MCF 10A (cell line): ENCODE measurements at regions of chr2 and their contacts with region 1.

Region 1: DNA sequence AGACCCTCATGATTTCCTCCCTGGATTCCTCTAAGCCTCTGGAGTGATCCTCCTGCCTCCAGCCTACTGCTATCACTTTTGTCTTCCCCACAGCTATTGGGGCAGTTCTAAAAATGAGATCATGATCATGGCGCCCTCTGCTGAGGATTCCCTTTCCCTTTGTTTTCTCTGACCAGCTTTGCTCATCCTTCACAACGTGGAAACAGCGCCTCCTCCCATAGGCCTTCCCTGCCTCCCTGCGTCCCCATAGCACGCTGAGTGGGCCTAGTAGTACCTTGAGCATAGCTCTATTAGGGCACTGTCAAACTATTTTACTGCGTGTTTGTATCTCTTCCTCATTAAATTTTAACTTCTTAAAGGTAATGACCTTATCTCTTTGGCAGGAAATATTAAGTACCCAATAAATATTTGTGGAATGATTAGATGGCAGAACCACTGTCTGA is 207.0 kb upstream of the FANCL start:
- DNase-seq: peak; percentile 92
- H3K4me3 Mint-ChIP-seq: no peak overlapping the region
- H3K27ac Mint-ChIP-seq: peak overlapping the region; percentile 17
- H3K4me1 Mint-ChIP-seq: peaks cover 14% of the 10 kb centered on the region
- H3K27me3 Mint-ChIP-seq: no peaks in the 10 kb centered on the region
- CTCF ChIP-seq: peak; percentile 73

Region 2: DNA sequence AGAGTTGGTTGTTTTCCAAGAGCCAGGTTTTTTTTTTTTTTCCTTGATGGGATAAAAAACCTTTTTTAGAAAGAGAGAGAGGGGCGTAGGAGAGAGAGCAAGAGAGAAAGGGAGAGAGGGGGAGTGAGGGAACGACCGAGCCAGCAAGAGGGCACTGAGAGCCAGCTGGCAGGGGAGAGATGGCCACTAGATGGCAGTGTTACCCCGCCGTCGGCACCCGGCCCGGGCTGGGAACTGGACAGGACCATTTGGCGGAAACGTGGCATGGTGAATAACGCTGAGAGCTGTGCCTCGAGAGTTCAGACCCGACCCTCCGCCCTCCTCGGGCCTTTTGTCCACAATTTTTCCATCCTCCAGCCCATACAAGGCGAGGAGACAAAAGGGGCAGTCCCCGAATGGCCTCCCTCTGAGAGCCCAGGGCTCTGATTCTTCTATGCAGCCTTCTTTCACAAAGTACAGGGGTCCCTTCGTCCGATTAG is 688.2 kb before region 1 on chr2:
- CTCF ChIA-PET with region 1: interaction called, 16 read pairs
- POLR2A ChIA-PET with region 1: no interaction called
- intact Hi-C with region 1: loop called (anchors 1 kb)
- DNase-seq: peak; percentile 81
- H3K4me3 Mint-ChIP-seq: peak overlapping the region; percentile 57
- H3K27ac Mint-ChIP-seq: peak overlapping the region; percentile 46
- H3K4me1 Mint-ChIP-seq: peaks cover 5% of the 10 kb centered on the region
- H3K27me3 Mint-ChIP-seq: no peaks in the 10 kb centered on the region
- CTCF ChIP-seq: peak; percentile 92

Region 3: GRCh38 chr2:58131191-58132011 is 316.7 kb before region 1 on chr2:
- CTCF ChIA-PET with region 1: interaction called, 8 read pairs
- POLR2A ChIA-PET with region 1: no interaction called
- intact Hi-C with region 1: loop called (anchors 2 kb)
- DNase-seq: no peak
- H3K4me3 Mint-ChIP-seq: no peak overlapping the region
- H3K27ac Mint-ChIP-seq: peak overlapping the region; percentile 66
- H3K4me1 Mint-ChIP-seq: peaks cover 15% of the 10 kb centered on the region
- H3K27me3 Mint-ChIP-seq: no peaks in the 10 kb centered on the region
- CTCF ChIP-seq: peak; percentile 13

Region 4: DNA sequence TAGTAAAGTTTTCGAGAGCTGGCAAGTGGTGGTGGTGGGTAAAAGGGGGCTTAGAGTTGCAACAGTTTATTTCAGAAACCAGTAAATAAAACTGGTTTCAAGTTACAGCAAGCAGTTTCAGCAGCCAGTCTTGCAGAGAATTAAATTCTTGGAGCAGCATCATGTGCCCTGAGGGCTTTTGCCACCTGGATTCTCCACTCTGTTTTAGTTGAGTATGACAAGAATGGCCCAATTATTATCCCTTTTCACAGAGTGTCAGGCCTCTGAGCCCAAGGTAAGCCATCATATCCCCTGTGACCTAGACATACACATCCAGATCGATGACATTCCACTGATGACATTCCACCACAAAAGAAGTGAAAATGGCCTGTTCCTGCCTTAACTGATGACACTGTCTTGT is 134.2 kb before region 1 on chr2:
- CTCF ChIA-PET with region 1: no interaction called
- POLR2A ChIA-PET with region 1: no interaction called
- intact Hi-C with region 1: no loop called
- DNase-seq: peak; percentile 10
- H3K4me3 Mint-ChIP-seq: no peak overlapping the region
- H3K27ac Mint-ChIP-seq: no peak overlapping the region
- H3K4me1 Mint-ChIP-seq: no peaks in the 10 kb centered on the region
- H3K27me3 Mint-ChIP-seq: no peaks in the 10 kb centered on the region
- CTCF ChIP-seq: no peak

Region 5: GRCh38 chr2:58364098-58364497 is 84.0 kb before region 1 on chr2:
- CTCF ChIA-PET with region 1: no interaction called
- POLR2A ChIA-PET with region 1: no interaction called
- intact Hi-C with region 1: no loop called
- DNase-seq: no peak
- H3K4me3 Mint-ChIP-seq: no peak overlapping the region
- H3K27ac Mint-ChIP-seq: no peak overlapping the region
- H3K4me1 Mint-ChIP-seq: no peaks in the 10 kb centered on the region
- H3K27me3 Mint-ChIP-seq: no peaks in the 10 kb centered on the region
- CTCF ChIP-seq: no peak

Region 6: GRCh38 chr2:58436872-58437271 is 11.2 kb before region 1 on chr2:
- CTCF ChIA-PET with region 1: interaction called, 15 read pairs
- POLR2A ChIA-PET with region 1: interaction called, 3 read pairs
- intact Hi-C with region 1: no loop called
- DNase-seq: peak; percentile 41
- H3K4me3 Mint-ChIP-seq: no peak overlapping the region
- H3K27ac Mint-ChIP-seq: no peak overlapping the region
- H3K4me1 Mint-ChIP-seq: peaks cover 7% of the 10 kb centered on the region
- H3K27me3 Mint-ChIP-seq: no peaks in the 10 kb centered on the region
- CTCF ChIP-seq: no peak

Region 7: GRCh38 chr2:58521803-58522554 is 73.9 kb after region 1 on chr2:
- CTCF ChIA-PET with region 1: no interaction called
- POLR2A ChIA-PET with region 1: no interaction called
- intact Hi-C with region 1: no loop called
- DNase-seq: no peak
- H3K4me3 Mint-ChIP-seq: no peak overlapping the region
- H3K27ac Mint-ChIP-seq: no peak overlapping the region
- H3K4me1 Mint-ChIP-seq: no peaks in the 10 kb centered on the region
- H3K27me3 Mint-ChIP-seq: no peaks in the 10 kb centered on the region
- CTCF ChIP-seq: no peak

Region 8: DNA sequence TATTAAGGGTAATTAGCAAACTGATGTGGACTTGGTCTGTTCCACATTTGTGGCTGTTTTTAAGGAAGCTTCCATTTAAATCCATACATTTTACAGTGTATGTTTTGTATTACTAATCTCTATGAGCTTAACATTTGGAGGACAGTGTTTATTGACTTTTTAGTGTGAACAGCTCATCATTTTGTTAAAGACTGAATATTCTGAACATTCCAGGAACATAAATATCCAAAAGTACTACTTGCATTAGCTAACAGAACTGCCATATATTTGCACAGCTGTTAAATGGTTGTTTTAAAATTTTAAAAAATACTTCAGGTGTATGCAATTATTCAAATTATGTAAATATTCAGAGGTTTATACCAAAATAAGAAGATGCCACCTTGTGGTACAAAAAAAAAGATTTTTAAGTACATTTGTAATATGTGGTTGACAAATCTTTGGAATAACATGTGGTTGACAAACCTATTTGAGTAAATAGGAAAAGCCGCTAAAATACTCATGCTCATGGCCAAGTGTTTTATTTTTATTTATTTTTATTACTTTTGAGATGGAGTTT is 232.7 kb after region 1 on chr2:
- CTCF ChIA-PET with region 1: interaction called, 4 read pairs
- POLR2A ChIA-PET with region 1: interaction called, 3 read pairs
- intact Hi-C with region 1: loop called (anchors 1 kb)
- DNase-seq: peak; percentile 3
- H3K4me3 Mint-ChIP-seq: no peak overlapping the region
- H3K27ac Mint-ChIP-seq: no peak overlapping the region
- H3K4me1 Mint-ChIP-seq: no peaks in the 10 kb centered on the region
- H3K27me3 Mint-ChIP-seq: no peaks in the 10 kb centered on the region
- CTCF ChIP-seq: peak; percentile 26